Heart left ventricle (tissue), 16 donors: ENCODE measurements at regions of chr12 and their contacts with region 1.

Region 1: DNA sequence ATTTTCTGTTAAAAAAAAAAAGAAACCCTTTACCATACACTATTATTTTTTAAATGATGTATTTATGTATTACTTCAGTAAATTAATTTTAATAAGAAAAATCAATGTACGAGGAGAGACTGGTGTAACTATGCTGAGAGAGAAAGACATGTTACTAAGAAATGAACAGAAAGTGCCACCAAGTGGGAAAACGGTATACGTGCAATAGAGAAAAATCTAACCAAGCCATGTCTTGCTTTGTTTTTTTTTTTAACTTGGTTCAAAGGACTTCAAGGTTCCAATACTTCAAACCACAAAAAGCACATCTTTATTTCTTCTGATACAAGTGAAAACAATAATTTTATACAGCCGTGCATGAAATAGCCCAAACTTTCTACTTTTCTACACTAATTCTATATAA is 22.9 kb downstream of the NDUFA12 start:
- DNase-seq: no peak
- ATAC-seq: no peak
- H3K4me3 ChIP-seq: no peak overlapping the region
- H3K27ac ChIP-seq: no peak overlapping the region
- H3K4me1 ChIP-seq: peaks cover 0 to 19% (median 3%) of the 10 kb centered on the region in 12 donors
- H3K27me3 ChIP-seq: no peaks in the 10 kb centered on the region
- CTCF ChIP-seq: peak in 8 of 12 donors; percentile 6 to 39 (median 28)
- POLR2A ChIP-seq: no peak

Region 2: GRCh38 chr12:94553130-94553519 is 427.5 kb before region 1 on chr12:
- intact Hi-C with region 1: loop called in 1 of 10 experiments (anchors 10 kb)
- DNase-seq: no peak
- ATAC-seq: no peak
- H3K4me3 ChIP-seq: no peak overlapping the region
- H3K27ac ChIP-seq: no peak overlapping the region
- H3K4me1 ChIP-seq: no peaks in the 10 kb centered on the region
- H3K27me3 ChIP-seq: no peaks in the 10 kb centered on the region
- CTCF ChIP-seq: no peak
- POLR2A ChIP-seq: no peak

Region 3: DNA sequence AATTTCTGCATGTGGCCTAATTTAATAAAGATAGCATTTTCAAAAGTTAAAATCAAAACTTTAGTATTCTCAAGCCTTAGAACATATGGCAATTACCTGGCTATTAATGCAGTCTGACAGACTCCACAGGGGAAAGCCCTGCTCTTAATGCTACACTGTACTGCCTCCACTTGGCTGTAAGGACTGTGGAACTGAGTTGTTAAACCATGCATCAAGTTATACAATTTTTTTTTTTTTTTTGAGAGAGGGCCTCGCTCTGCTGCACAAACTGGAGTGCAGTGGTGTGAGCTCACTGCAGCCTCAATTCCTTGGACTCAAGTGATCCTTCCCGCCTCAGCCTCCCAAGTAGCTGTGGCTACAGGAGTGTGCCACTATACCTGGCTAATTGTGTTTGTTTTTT is 41.9 kb after region 1 on chr12:
- intact Hi-C with region 1: no loop called
- DNase-seq: no peak
- ATAC-seq: no peak
- H3K4me3 ChIP-seq: no peak overlapping the region
- H3K27ac ChIP-seq: no peak overlapping the region
- H3K4me1 ChIP-seq: no peaks in the 10 kb centered on the region
- H3K27me3 ChIP-seq: no peaks in the 10 kb centered on the region
- CTCF ChIP-seq: no peak
- POLR2A ChIP-seq: no peak

Region 4: DNA sequence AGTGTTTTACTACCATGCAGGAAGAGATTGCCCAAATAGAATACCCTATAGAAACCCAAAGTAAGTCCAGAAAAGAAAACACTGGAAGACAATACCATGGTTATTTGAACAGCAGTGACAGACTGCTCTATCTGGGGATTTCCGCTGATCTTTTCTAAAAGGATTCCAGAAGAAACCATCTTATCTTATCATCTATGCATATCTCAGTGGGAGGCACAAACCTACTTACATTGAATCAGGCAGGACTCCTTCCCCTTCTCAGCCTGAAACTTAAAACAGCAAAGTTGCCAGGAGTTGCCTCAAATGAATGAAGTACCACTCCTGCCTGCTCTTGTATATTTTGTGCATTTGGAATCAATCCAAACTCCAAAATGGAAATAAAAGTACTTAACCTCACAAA is 149.5 kb after region 1 on chr12:
- intact Hi-C with region 1: no loop called
- DNase-seq: no peak
- ATAC-seq: no peak
- H3K4me3 ChIP-seq: no peak overlapping the region
- H3K27ac ChIP-seq: no peak overlapping the region
- H3K4me1 ChIP-seq: peaks cover 0 to 22% (median 0%) of the 10 kb centered on the region in 12 donors
- H3K27me3 ChIP-seq: no peaks in the 10 kb centered on the region
- CTCF ChIP-seq: no peak
- POLR2A ChIP-seq: no peak

Region 5: GRCh38 chr12:95412482-95413311 is 432.1 kb after region 1 on chr12:
- intact Hi-C with region 1: no loop called
- DNase-seq: no peak
- ATAC-seq: no peak
- H3K4me3 ChIP-seq: no peak overlapping the region
- H3K27ac ChIP-seq: peak overlapping the region in 1 of 12 donors; percentile 8
- H3K4me1 ChIP-seq: peaks cover 0 to 5% (median under 1%) of the 10 kb centered on the region in 12 donors
- H3K27me3 ChIP-seq: no peaks in the 10 kb centered on the region
- CTCF ChIP-seq: no peak
- POLR2A ChIP-seq: no peak